ENCODE measurements at regions of chr20 and their contacts with region 1.

Region 1: DNA sequence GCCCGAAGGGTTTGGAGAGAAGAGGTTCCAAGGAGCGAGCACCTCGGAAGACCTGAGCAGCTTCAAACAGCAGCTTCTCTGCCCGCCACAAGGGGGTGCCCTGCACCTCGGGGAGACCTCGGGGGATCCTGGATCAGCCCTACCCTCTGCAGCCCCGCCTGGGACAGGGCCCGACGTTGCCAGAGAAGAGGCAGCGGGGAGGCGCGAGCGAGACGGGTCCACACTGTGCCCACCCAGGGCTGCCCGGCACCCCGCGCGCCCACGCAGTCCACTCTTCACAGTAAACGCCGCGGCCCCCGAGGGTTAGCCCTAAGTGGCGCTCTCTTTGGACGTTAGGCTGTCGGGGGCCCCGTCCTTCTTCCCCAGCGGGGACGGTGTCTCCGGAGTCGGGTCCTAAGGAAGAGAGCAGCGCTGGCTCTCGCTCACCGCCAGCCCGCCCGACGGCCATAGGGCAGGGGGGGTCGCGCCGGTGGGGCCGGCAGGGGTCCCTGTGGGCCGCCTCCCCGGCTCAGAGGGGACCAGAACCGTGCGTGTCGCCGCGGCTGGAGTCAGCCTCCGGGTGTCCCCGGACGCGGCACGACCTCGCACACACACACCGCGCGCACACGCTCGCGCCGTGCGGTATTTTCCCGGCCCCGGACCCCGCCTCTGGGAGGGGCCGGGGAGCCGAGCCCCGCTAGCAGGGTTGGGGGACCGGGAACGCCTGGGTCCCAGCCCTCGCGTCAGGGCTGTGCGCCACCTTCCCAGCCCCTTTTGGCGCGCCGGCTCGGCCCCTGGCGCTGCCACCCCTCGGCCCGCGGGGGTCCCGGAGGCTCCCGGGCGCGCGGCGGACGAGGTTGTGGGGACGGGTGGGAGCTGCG is 929 bp downstream of the CDH22 start:
- DNase-seq: peak; percentile 58 to 79 (median 74)
- ATAC-seq: peak; percentile 90
- H3K4me3 ChIP-seq: peak overlapping the region; percentile 43
- H3K4me3 Mint-ChIP-seq: peak overlapping the region; percentile 24 to 83 (median 73)
- H3K27ac ChIP-seq: no peak overlapping the region
- H3K27ac Mint-ChIP-seq: no peak overlapping the region
- H3K4me1 ChIP-seq: peaks cover 0 to 5% of the 10 kb centered on the region in 2 donors
- H3K4me1 Mint-ChIP-seq: peaks cover 4 to 28% (median 15%) of the 10 kb centered on the region in 7 donors
- H3K27me3 ChIP-seq: peaks cover 7 to 15% of the 10 kb centered on the region in 2 donors
- H3K27me3 Mint-ChIP-seq: peaks cover 60 to 76% (median 71%) of the 10 kb centered on the region in 5 donors

Region 2: GRCh38 chr20:46022411-46023147 is 284.8 kb before region 1 on chr20:
- CTCF ChIA-PET with region 1: no interaction called
- POLR2A ChIA-PET with region 1: no interaction called
- intact Hi-C with region 1: loop called in 1 of 2 experiments (anchors 2 kb)
- DNase-seq: peak; percentile 47 to 81 (median 69)
- ATAC-seq: peak; percentile 66
- H3K4me3 ChIP-seq: peak overlapping the region; percentile 25
- H3K4me3 Mint-ChIP-seq: peak overlapping the region; percentile 46 to 85 (median 76)
- H3K27ac ChIP-seq: no peak overlapping the region
- H3K27ac Mint-ChIP-seq: no peak overlapping the region
- H3K4me1 ChIP-seq: peaks cover 0 to 6% of the 10 kb centered on the region in 2 donors
- H3K4me1 Mint-ChIP-seq: peaks cover 12 to 25% (median 17%) of the 10 kb centered on the region in 7 donors
- H3K27me3 ChIP-seq: peaks cover 7 to 15% of the 10 kb centered on the region in 2 donors
- H3K27me3 Mint-ChIP-seq: peaks cover 42 to 63% (median 47%) of the 10 kb centered on the region in 5 donors

Region 3: GRCh38 chr20:46349035-46349741 is 41.8 kb after region 1 on chr20:
- CTCF ChIA-PET with region 1: interaction called, 7 read pairs
- POLR2A ChIA-PET with region 1: no interaction called
- intact Hi-C with region 1: loop called (anchors 1 kb)
- DNase-seq: peak in 7 of 9 donors; percentile 30 to 57 (median 39)
- ATAC-seq: peak; percentile 68
- H3K4me3 ChIP-seq: no peak overlapping the region
- H3K4me3 Mint-ChIP-seq: no peak overlapping the region
- H3K27ac ChIP-seq: no peak overlapping the region
- H3K27ac Mint-ChIP-seq: peak overlapping the region in 5 of 9 donors; percentile 23 to 80 (median 40)
- H3K4me1 ChIP-seq: no peaks in the 10 kb centered on the region
- H3K4me1 Mint-ChIP-seq: peaks cover 19 to 33% (median 27%) of the 10 kb centered on the region in 7 donors
- H3K27me3 ChIP-seq: no peaks in the 10 kb centered on the region
- H3K27me3 Mint-ChIP-seq: peaks cover 0 to 8% (median 0%) of the 10 kb centered on the region in 5 donors

Region 4: DNA sequence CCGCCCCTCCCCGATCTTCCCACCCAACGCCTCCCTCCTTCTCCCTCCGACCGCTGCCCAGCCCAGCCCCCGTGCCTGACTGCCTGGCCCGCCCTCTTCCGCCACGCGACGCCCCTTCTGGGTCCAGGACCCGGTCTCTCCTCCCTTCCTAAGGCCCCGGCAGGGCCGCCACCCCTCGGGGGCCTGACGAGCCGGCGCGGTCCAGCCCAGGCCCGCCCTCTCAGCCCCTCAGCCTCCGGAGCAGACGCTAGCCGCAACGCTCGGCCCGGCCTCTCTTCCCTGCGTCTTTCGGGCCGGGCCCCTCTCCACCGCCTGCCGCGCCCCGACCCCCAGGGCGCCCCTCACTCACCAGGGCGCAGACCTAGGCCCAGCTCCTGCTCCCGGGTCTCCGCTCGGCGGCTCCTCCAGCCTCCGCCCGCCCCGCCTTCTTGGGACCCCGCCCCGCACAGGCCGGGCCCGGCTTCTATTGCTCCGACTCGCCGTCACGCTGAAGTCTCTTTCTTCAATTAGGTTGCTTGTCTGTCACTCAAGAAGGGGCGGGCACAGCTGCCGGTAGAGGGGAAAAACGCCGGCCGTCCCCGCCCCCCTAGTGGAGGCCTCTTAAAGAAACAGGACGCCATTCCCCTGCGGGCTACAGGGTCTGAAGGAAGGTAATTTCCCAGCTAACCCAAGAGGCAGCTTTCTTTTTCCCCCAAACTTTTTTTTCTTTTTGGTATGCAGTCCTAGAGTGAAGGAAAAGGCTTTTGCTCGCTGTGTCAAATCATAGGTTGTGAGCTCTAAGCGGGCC is 99.0 kb after region 1 on chr20 and contains the start of gene ELMO2:
- CTCF ChIA-PET with region 1: interaction called, 14 read pairs
- POLR2A ChIA-PET with region 1: no interaction called
- intact Hi-C with region 1: loop called (anchors 1 kb)
- DNase-seq: peak; percentile 81 to 97 (median 94)
- ATAC-seq: peak; percentile 95
- H3K4me3 ChIP-seq: peak within 1 kb of the TSS; percentile 86
- H3K4me3 Mint-ChIP-seq: peak within 1 kb of the TSS; percentile 88 to 97 (median 95)
- H3K27ac ChIP-seq: peak within 1 kb of the TSS; percentile 97
- H3K27ac Mint-ChIP-seq: peak within 1 kb of the TSS; percentile 88 to 97 (median 93)
- H3K4me1 ChIP-seq: peaks cover 38 to 50% of the 10 kb centered on the region in 2 donors
- H3K4me1 Mint-ChIP-seq: peaks cover 44 to 78% (median 70%) of the 10 kb centered on the region in 7 donors
- H3K27me3 ChIP-seq: no peaks in the 10 kb centered on the region
- H3K27me3 Mint-ChIP-seq: peaks cover 0 to 3% (median 0%) of the 10 kb centered on the region in 5 donors
- total RNA-seq, gene ELMO2: 50.8 to 104 (median 52.3) TPM

Region 5: GRCh38 chr20:46411637-46412036 is 104.3 kb after region 1 on chr20:
- CTCF ChIA-PET with region 1: interaction called, 14 read pairs
- POLR2A ChIA-PET with region 1: no interaction called
- intact Hi-C with region 1: loop called (anchors 1 kb)
- DNase-seq: no peak
- ATAC-seq: no peak
- H3K4me3 ChIP-seq: no peak overlapping the region
- H3K4me3 Mint-ChIP-seq: no peak overlapping the region
- H3K27ac ChIP-seq: no peak overlapping the region
- H3K27ac Mint-ChIP-seq: peak overlapping the region in 1 of 9 donors; percentile 32
- H3K4me1 ChIP-seq: peaks cover 9 to 11% of the 10 kb centered on the region in 2 donors
- H3K4me1 Mint-ChIP-seq: peaks cover 13 to 31% (median 28%) of the 10 kb centered on the region in 7 donors
- H3K27me3 ChIP-seq: no peaks in the 10 kb centered on the region
- H3K27me3 Mint-ChIP-seq: peaks cover 4 to 43% (median 21%) of the 10 kb centered on the region in 5 donors

Region 6: DNA sequence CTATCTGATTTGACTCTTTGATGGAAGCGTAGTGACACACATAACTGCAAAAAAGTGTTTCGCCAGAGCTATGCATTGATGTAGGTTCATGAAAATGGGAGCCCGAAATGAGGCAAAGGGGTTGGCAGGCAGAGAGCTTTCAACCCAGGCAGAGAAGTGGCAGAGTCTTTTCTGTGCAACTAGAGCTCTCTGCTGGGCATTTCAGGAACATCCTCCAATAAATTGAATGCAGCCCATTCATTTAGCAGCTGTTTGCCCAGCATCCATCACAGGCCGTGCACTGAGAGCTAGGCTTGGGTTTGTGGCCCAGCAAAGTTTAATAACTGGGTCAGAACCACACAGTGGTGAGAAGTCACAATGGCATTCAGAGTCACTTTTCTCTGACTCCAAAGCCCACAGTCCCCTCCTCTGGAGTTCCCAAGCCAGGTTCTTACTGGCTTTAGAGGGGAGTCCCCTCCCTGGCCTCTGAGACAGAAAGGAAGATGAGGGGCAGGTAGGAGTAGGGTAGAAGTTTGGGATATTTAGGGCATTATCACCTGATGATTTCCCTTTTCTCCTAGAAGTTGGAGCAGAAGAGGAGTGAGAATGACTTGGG is 130.9 kb after region 1 on chr20:
- CTCF ChIA-PET with region 1: interaction called, 7 read pairs
- POLR2A ChIA-PET with region 1: no interaction called
- intact Hi-C with region 1: loop called in 1 of 2 experiments (anchors 1 kb)
- DNase-seq: peak in 7 of 9 donors; percentile 4 to 33 (median 17)
- ATAC-seq: peak; percentile 41
- H3K4me3 ChIP-seq: no peak overlapping the region
- H3K4me3 Mint-ChIP-seq: no peak overlapping the region
- H3K27ac ChIP-seq: no peak overlapping the region
- H3K27ac Mint-ChIP-seq: no peak overlapping the region
- H3K4me1 ChIP-seq: no peaks in the 10 kb centered on the region
- H3K4me1 Mint-ChIP-seq: no peaks in the 10 kb centered on the region
- H3K27me3 ChIP-seq: no peaks in the 10 kb centered on the region
- H3K27me3 Mint-ChIP-seq: peaks cover 19 to 35% (median 24%) of the 10 kb centered on the region in 5 donors

Region 7: GRCh38 chr20:46485431-46485830 is 178.1 kb after region 1 on chr20:
- CTCF ChIA-PET with region 1: no interaction called
- POLR2A ChIA-PET with region 1: no interaction called
- intact Hi-C with region 1: loop called in 1 of 2 experiments (anchors 5 kb)
- DNase-seq: no peak
- ATAC-seq: no peak
- H3K4me3 ChIP-seq: no peak overlapping the region
- H3K4me3 Mint-ChIP-seq: no peak overlapping the region
- H3K27ac ChIP-seq: no peak overlapping the region
- H3K27ac Mint-ChIP-seq: no peak overlapping the region
- H3K4me1 ChIP-seq: no peaks in the 10 kb centered on the region
- H3K4me1 Mint-ChIP-seq: peaks cover 0 to 5% (median 0%) of the 10 kb centered on the region in 7 donors
- H3K27me3 ChIP-seq: peaks cover 5 to 9% of the 10 kb centered on the region in 2 donors
- H3K27me3 Mint-ChIP-seq: peaks cover 52 to 69% (median 60%) of the 10 kb centered on the region in 5 donors